Endothelial cell of umbilical vein (primary cell): ENCODE measurements at regions of chr14 and their contacts with region 1.

Region 1: DNA sequence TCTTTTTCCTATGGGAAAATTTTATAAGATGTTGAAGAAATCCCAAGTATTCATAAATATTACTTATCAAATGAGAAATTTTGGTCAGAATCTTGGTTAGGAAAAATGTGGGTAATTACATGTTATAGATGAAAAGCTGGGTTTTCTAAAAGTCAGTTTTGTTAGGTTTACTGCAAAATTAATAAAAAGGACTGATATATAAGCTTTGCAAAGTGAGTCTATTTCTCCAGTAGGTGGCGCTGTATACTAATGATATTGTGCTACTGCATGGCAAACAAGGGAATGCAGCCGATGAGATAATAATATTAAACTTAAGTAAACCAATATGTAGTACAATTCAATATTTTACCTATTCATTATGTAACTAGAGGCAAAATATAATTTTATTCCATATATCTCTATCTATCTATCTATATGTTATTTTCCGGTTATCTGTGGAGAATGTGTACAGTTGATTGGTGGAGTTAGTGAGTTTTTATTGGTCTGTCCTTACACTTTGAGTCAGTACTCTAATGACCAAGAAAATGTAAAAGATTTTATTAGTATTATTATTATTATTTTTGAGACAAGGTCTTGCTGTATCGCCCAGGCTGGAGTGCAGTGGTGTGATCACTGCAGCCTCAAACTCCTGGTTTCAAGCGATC is 32.9 kb downstream of the MIPOL1 start:
- DNase-seq: peak; percentile 66
- H3K4me3 ChIP-seq: no peak overlapping the region
- H3K27ac ChIP-seq: no peak overlapping the region
- H3K4me1 ChIP-seq: no peaks in the 10 kb centered on the region
- H3K27me3 ChIP-seq: no peaks in the 10 kb centered on the region
- CTCF ChIP-seq: peak; percentile 40 to 54
- POLR2A ChIP-seq: no peak

Region 2: DNA sequence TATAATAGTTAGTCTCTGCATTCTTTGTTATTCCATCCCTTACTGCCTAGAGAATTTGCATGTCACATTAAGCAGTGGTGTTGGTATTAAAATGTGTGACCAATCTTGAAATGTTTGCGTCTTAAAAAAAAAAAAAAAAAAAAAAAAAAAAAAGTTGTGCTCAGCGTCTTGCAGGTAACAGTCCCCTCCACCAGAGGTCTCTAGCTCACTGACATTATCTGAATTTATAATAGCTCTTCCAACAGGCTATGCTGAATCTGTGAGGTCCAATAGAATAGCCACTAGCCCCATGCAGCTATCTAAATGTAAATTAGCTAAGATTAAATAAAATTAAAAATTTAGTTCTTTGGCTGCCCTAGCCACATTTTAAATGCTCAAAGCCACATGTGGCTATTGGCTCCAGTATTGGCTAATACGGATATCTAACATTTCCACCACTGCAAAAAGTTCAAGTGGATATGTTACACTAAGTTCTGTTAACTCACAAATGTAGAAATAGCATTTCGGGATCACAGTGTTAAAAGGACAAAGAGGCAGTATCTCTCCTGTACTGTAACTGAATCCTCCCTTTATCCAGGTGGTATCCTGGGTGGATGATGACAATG is 676.9 kb before region 1 on chr14:
- CTCF ChIA-PET with region 1: interaction called, 17 read pairs
- POLR2A ChIA-PET with region 1: no interaction called
- dilution Hi-C with region 1: no loop called
- intact Hi-C with region 1: loop called (anchors 2 kb)
- DNase-seq: peak; percentile 49
- H3K4me3 ChIP-seq: no peak overlapping the region
- H3K27ac ChIP-seq: no peak overlapping the region
- H3K4me1 ChIP-seq: no peaks in the 10 kb centered on the region
- H3K27me3 ChIP-seq: peaks cover 3 to 6% of the 10 kb centered on the region in 2 experiments
- CTCF ChIP-seq: peak; percentile 56 to 61
- POLR2A ChIP-seq: no peak

Region 3: DNA sequence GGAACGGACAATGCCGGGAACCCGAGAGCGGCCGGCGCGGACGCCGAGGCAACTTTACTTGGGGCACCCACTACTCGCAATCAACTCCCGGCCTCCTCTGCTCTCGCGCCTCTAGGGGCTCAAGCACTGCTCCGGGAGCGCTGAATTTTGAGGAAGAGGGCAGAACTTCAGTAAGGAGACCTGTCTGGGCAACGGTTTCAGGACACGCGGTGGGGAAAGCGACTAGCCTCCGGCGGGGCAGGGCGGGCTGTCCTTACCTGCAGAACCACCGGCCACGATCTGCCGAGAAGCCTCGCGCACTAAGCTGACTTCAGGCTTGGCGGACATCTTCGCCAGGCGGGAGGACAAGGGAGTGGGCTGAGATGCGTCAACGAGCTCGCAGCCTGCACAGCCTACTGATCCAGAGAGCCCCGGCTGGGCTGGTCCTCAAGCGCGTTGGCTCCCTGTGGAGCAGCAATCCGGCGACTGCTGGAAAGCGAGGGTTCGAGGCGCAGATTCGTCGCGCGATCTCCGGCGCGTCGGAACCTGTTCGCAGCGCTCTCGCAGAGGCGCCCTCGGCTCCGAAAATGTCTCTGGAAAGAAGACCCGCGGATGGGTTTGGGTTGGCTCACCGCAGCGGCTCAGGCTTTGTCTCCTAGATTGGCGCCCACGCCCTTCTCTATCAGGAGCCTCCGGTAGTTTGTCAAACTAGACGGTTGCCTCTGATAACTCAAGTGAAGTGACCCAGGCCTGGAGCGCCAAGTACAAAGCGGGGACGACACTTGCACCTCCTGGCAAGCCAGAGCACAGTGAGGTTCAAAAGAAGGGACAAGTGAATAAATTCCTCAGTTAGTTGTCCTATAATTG is 58.4 kb before region 1 on chr14 and contains the start of gene SLC25A21:
- CTCF ChIA-PET with region 1: interaction called, 12 read pairs
- POLR2A ChIA-PET with region 1: no interaction called
- dilution Hi-C with region 1: no loop called
- intact Hi-C with region 1: loop called (anchors 5 kb)
- DNase-seq: peak; percentile 92
- H3K4me3 ChIP-seq: peak within 1 kb of the TSS; percentile 57 to 81 (median 62)
- H3K27ac ChIP-seq: peak within 1 kb of the TSS; percentile 85
- H3K4me1 ChIP-seq: peaks cover 12% of the 10 kb centered on the region
- H3K27me3 ChIP-seq: no peaks in the 10 kb centered on the region
- CTCF ChIP-seq: peak in 1 of 2 donors; percentile 40
- POLR2A ChIP-seq: peak; percentile 58
- total RNA-seq, gene SLC25A21: 0.92 and 1.4 TPM in 2 replicates

Region 4: DNA sequence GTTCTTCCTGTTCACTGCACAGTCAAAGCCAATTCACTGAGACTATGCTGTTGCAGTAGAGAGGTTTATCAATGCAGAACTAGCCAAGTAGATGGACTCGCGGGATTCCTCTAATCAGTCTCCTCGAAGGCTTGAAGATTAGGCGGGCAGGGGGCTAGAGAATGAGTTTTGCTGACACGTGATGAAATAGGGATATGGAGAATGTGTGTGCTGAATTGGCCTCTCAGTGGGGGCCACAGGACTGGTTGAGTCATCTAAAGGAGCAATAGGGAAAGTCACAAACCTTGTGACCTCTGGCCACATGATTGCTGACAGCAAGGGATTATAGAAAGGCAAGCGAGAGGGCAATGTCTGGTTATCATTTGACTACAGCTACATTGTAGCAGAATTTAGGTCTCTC is 20.2 kb before region 1 on chr14:
- CTCF ChIA-PET with region 1: interaction called, 56 read pairs
- POLR2A ChIA-PET with region 1: no interaction called
- dilution Hi-C with region 1: no loop called
- intact Hi-C with region 1: no loop called
- DNase-seq: no peak
- H3K4me3 ChIP-seq: no peak overlapping the region
- H3K27ac ChIP-seq: no peak overlapping the region
- H3K4me1 ChIP-seq: peaks cover 33% of the 10 kb centered on the region
- H3K27me3 ChIP-seq: no peaks in the 10 kb centered on the region
- CTCF ChIP-seq: no peak
- POLR2A ChIP-seq: no peak

Region 5: DNA sequence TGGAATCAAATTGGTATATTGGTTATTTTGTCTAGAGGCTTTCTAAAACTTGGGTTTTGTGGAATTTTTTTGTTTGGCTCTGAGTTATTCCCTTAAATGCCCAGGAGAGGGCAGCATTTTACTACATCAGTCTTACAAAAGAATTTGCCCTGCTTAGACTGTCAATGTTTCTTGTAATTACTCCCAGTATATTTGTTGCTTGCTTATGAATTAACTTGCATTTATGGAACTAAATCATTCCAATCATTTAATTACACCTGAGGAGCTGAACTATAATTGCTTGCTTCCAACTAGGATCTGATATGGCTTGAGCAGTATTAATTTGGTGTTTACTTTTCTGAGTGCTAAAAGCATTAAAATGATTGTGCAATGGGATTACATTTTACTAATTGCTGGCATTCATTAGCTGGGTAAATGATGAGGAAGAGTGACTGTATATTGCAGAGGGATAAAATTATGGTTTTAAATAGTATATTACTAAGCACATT is 15.8 kb after region 1 on chr14:
- CTCF ChIA-PET with region 1: interaction called, 24 read pairs
- POLR2A ChIA-PET with region 1: no interaction called
- dilution Hi-C with region 1: no loop called
- intact Hi-C with region 1: no loop called
- DNase-seq: peak; percentile 52
- H3K4me3 ChIP-seq: no peak overlapping the region
- H3K27ac ChIP-seq: no peak overlapping the region
- H3K4me1 ChIP-seq: no peaks in the 10 kb centered on the region
- H3K27me3 ChIP-seq: no peaks in the 10 kb centered on the region
- CTCF ChIP-seq: peak; percentile 27 to 54
- POLR2A ChIP-seq: no peak